WTC11 (cell line): ENCODE measurements at regions of chr19 and their contacts with region 1.

Region 1: DNA sequence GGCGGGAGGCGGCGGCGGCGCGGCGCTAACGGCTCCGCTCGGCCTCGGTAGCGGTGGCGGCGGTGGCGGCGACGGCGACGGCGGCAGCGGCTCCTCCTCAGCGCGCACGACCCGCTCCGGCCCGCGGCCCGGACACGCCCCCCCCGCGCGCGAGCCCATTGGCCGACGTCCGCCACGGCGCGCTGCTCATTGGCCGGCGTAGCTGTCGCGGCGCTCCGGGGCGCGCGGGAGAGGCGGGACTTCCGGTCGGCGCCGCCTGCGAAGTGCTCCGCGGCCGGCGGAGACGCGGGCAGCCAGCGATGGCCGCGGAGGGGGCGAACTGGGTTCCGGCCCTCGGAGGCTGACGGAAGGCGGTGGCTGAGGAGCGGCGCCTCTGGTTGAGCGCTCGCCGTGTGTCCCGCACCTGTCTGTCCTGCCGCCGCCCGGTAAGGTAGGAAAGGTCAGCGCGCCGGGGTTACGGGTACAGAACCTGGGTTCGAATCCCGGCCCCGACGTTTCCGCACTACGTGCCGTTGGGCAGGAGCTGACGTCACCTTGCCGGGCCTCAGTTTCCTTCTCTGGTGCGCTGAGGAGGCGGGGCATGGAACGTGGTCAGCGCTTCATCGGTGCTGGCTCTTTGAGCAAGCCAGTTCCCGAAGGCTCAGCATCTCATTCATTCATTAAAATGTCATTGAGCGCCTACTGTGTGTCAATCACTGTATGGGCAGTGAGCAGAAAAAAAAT is at the start of gene ELAVL1:
- DNase-seq: peak; percentile 90
- ATAC-seq: peak; percentile 72
- H3K4me3 Mint-ChIP-seq: peak within 1 kb of the TSS; percentile 98
- H3K27ac Mint-ChIP-seq: peak within 1 kb of the TSS; percentile 97
- H3K4me1 Mint-ChIP-seq: peaks cover 31% of the 10 kb centered on the region
- H3K27me3 Mint-ChIP-seq: no peaks in the 10 kb centered on the region
- CTCF ChIP-seq: no peak
- total RNA-seq, gene ELAVL1: 144 to 160 TPM (median 149 TPM) in 3 replicates

Region 2: DNA sequence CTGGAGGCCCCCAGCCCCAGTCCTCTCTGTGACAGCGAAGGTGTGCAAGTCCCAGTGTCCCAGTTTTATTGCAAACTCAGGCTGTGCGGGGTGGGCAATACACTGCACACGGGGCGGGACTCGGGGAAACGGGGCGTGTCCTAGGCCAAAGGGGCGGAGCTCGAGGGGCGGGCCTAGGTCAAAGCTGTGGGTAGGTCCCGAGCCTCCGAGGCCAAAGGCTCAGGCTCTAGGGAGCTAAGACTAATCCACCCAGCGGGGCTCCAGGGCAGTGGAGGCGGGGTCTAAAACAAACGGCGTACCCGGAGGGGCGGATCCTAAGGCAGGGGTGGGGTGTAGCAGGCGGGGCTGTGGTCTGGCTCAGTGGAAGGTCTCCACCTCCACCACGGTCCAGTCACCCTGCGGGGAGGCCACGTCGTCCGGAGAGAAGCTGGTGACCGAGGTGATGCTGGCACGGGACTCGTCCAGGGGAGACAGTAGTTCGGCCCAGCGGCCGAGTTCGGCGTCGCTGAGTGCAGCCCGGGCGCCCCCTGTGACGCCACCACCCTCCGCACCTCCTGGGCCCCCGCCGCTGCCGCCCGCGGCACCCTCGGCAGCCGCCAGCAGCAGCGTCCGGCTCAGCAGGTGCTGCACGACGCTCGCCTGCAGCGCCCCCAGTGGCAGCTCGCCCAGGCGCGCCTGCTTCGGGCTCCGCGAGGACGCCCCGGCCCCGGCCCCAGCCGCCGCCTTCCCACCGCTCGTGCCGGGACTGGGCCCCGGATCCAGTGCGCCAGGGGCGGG is 136.8 kb before region 1 on chr19:
- CTCF ChIA-PET with region 1: interaction called, 10 read pairs
- POLR2A ChIA-PET with region 1: no interaction called
- DNase-seq: peak; percentile 95
- ATAC-seq: peak; percentile 41
- H3K4me3 Mint-ChIP-seq: peak overlapping the region; percentile 63
- H3K27ac Mint-ChIP-seq: peak overlapping the region; percentile 78; the same call in 1 of the 2 replicates
- H3K4me1 Mint-ChIP-seq: peaks cover 28% of the 10 kb centered on the region
- H3K27me3 Mint-ChIP-seq: peaks cover 62% of the 10 kb centered on the region
- CTCF ChIP-seq: peak; percentile 77

Region 3: GRCh38 chr19:7897292-7897691 is 108.4 kb before region 1 on chr19:
- CTCF ChIA-PET with region 1: no interaction called
- POLR2A ChIA-PET with region 1: no interaction called
- DNase-seq: no peak
- ATAC-seq: no peak
- H3K4me3 Mint-ChIP-seq: no peak overlapping the region
- H3K27ac Mint-ChIP-seq: no peak overlapping the region
- H3K4me1 Mint-ChIP-seq: peaks cover 3% of the 10 kb centered on the region; the same call in 1 of the 2 replicates
- H3K27me3 Mint-ChIP-seq: peaks cover 2% of the 10 kb centered on the region; the same call in 1 of the 2 replicates
- CTCF ChIP-seq: no peak

Region 4: GRCh38 chr19:7953060-7953459 is 52.6 kb before region 1 on chr19:
- CTCF ChIA-PET with region 1: interaction called, 13 read pairs
- POLR2A ChIA-PET with region 1: no interaction called
- DNase-seq: no peak
- ATAC-seq: peak; percentile 16; the same call in 1 of the 2 replicates
- H3K4me3 Mint-ChIP-seq: no peak overlapping the region
- H3K27ac Mint-ChIP-seq: no peak overlapping the region
- H3K4me1 Mint-ChIP-seq: peaks cover 9% of the 10 kb centered on the region
- H3K27me3 Mint-ChIP-seq: no peaks in the 10 kb centered on the region
- CTCF ChIP-seq: no peak

Region 5: GRCh38 chr19:8017808-8018207 is 12.1 kb after region 1 on chr19:
- CTCF ChIA-PET with region 1: interaction called, 15 read pairs
- POLR2A ChIA-PET with region 1: no interaction called
- DNase-seq: no peak
- ATAC-seq: peak; percentile 44; the same call in 1 of the 2 replicates
- H3K4me3 Mint-ChIP-seq: no peak overlapping the region
- H3K27ac Mint-ChIP-seq: no peak overlapping the region; the same call in 1 of the 2 replicates
- H3K4me1 Mint-ChIP-seq: no peaks in the 10 kb centered on the region
- H3K27me3 Mint-ChIP-seq: no peaks in the 10 kb centered on the region
- CTCF ChIP-seq: no peak

Region 6: GRCh38 chr19:8046569-8047165 is 41.0 kb after region 1 on chr19:
- CTCF ChIA-PET with region 1: interaction called, 11 read pairs
- POLR2A ChIA-PET with region 1: interaction called, 3 read pairs
- DNase-seq: no peak
- ATAC-seq: no peak
- H3K4me3 Mint-ChIP-seq: no peak overlapping the region
- H3K27ac Mint-ChIP-seq: no peak overlapping the region
- H3K4me1 Mint-ChIP-seq: no peaks in the 10 kb centered on the region
- H3K27me3 Mint-ChIP-seq: peaks cover 37% of the 10 kb centered on the region
- CTCF ChIP-seq: no peak

Region 7: DNA sequence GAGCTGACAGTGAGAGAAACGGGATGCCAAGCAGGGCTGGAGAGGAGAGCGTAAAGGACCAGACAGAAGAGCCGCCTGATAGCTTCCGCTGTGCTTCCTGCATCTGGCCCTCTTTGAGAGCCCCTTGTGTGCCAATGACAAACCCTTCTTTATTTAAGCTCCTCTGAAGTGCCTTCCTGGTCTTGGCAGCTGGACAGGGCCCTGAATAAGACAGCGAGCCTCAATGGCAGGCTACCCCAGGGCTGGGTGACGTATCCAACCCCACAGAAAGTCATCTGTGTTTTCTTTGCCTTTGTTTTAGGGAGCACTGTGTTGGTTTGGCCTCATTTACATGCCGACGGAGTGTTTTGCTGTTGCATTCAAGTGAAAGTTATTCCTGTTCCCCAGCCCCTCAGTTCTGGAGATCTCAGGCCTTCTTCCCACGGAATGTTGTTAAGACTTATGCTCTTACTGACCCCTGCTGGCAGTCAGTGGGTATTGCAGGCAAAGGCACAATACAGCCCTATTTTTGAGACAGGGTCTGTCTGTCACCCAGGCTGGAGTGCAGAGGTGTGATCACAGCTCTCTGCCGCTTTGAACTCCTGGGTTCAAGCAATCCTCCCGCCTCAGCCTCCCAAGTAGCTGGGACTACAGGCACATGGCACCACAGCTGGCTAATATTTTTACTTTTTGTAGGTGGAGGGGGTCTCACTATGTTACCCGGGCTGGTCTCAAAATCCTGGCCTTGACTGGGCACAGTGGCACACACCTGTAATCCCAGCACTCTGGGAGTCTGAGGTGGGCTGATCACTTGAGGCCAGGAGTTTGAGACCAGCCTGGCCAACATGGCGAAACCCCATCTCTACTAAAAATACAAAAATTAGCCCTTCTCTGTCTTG is 63.6 kb after region 1 on chr19:
- CTCF ChIA-PET with region 1: interaction called, 30 read pairs
- POLR2A ChIA-PET with region 1: interaction called, 5 read pairs
- DNase-seq: peak; percentile 73
- ATAC-seq: peak; percentile 51
- H3K4me3 Mint-ChIP-seq: no peak overlapping the region
- H3K27ac Mint-ChIP-seq: no peak overlapping the region
- H3K4me1 Mint-ChIP-seq: no peaks in the 10 kb centered on the region
- H3K27me3 Mint-ChIP-seq: no peaks in the 10 kb centered on the region; the same call in 1 of the 2 replicates
- CTCF ChIP-seq: peak; percentile 94